Dorsolateral prefrontal cortex (tissue), 120 donors: ENCODE measurements at regions of chr11 and their contacts with region 1.

Region 1: GRCh38 chr11:83813296-83813695 is 527.1 kb upstream of the CCDC90B start:
- DNase-seq: peak in 1 of 10 donors; percentile 24
- H3K4me3 ChIP-seq: no peak overlapping the region
- H3K27ac ChIP-seq: peak overlapping the region in 44 of 59 donors; percentile 5 to 73 (median 36)
- H3K27me3 ChIP-seq: no peaks in the 10 kb centered on the region
- CTCF ChIP-seq: no peak

Region 2: DNA sequence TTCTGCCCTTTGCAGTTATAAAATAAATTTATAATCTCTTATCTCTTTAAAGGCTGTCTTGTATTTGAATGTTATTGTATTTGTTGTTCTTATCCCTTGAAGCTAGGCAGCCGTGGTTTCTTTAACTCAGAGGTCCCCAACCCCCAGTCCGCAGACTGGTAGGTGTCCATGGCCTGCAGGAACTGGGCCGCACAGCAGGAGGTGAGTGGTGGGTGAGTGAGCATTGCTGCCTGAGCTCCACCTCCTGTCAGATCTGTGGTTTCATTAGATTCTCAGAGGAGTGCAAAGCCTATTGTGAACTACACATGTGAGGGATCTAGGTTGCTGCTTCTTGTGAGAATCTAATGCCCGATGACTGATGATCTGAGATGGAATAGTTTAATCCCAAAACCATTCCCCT is 147.1 kb before region 1 on chr11:
- intact Hi-C with region 1: loop called (anchors 5 kb)
- DNase-seq: no peak
- H3K4me3 ChIP-seq: no peak overlapping the region
- H3K27ac ChIP-seq: no peak overlapping the region
- H3K27me3 ChIP-seq: no peaks in the 10 kb centered on the region
- CTCF ChIP-seq: no peak

Region 3: DNA sequence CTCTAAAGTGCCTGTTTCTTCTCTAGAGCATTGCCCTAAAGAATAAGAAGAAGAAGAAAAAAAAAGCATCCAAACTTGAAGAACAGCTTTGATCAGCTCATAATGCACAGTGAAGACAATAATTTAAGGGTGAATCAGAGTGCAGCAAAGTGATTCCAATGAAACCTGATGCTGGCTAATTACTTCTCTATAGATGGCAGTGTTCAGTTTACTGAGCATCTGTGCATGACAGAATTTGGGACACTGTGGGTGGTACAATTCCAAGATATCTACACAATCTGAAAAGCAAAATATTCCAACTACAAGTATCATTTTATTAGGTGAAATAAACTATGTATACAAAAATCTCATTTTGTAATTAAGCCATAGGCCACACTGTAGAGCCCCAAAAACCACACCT is 76.6 kb before region 1 on chr11:
- intact Hi-C with region 1: loop called in 1 of 2 experiments (anchors 5 kb)
- DNase-seq: no peak
- H3K4me3 ChIP-seq: no peak overlapping the region
- H3K27ac ChIP-seq: peak overlapping the region in 44 of 59 donors; percentile 1 to 75 (median 44)
- H3K27me3 ChIP-seq: no peaks in the 10 kb centered on the region
- CTCF ChIP-seq: peak in 27 of 56 donors; percentile 12 to 53 (median 35)